Common myeloid progenitor, CD34-positive (primary cell): ENCODE measurements at regions of chr4 and their contacts with region 1.

Region 1: GRCh38 chr4:143335979-143336780 is 496 bp upstream of the GAB1 start:
- DNase-seq: peak; percentile 86 to 92 (median 91)
- H3K4me3 ChIP-seq: peak overlapping the region; percentile 75 to 96 (median 94)
- H3K27ac ChIP-seq: peak overlapping the region; percentile 66 to 82
- H3K4me1 ChIP-seq: peaks cover 6 to 18% (median 12%) of the 10 kb centered on the region in 4 experiments
- H3K27me3 ChIP-seq: no peaks in the 10 kb centered on the region

Region 2: GRCh38 chr4:143346206-143346605 is 10.0 kb after region 1 on chr4:
- CTCF ChIA-PET with region 1: interaction called, 14 read pairs
- POLR2A ChIA-PET with region 1: interaction called, 5 read pairs
- DNase-seq: no peak
- H3K4me3 ChIP-seq: no peak overlapping the region
- H3K27ac ChIP-seq: no peak overlapping the region
- H3K4me1 ChIP-seq: peaks cover 0 to 3% (median 0%) of the 10 kb centered on the region in 4 experiments
- H3K27me3 ChIP-seq: no peaks in the 10 kb centered on the region